ENCODE measurements at regions of chr15 and their contacts with region 1.

Region 1: GRCh38 chr15:64681424-64682024 is 93.9 kb downstream of the RBPMS2 start:
- DNase-seq: peak in 1 of 2 donors; percentile 54
- ATAC-seq: peak; percentile 54 to 87 (median 75)
- H3K4me3 ChIP-seq: no peak overlapping the region
- H3K27ac ChIP-seq: peak overlapping the region in 1 of 10 donors; percentile 24
- H3K4me1 ChIP-seq: peaks cover 3 to 45% (median 13%) of the 10 kb centered on the region in 9 donors
- H3K27me3 ChIP-seq: no peaks in the 10 kb centered on the region
- CTCF ChIP-seq: peak; percentile 27 to 84 (median 65)

Region 2: DNA sequence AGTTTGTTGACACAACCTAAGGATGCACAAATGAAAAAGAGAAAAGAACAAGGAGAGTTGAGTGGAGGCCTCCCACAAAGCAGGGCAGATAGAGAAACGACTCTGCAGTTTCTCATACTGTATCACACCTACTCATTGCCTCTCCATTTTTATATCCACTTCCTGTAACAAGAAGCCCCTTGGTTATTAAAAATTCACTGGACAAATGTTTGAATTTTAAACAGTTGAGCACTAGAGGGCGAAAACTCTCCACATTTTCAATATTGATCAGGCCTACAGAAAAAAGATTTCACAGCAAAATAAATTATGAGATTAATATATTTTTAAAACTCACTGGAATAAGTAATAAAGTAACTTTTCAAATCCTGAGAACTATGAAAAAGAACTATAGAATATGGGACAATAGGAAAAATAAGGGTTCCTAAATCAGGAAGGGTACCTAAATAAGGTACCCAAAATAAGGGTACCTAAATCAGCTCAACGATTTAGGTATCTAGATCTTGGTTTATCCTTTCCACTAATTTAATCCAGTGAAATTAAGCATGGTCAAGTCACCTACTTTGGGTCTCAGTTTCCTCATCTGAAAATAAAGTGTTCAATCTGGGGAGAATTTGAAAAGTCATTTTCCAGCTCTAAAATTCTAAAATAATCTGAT is 471.7 kb before region 1 on chr15:
- intact Hi-C with region 1: loop called in 2 of 10 experiments (anchors 5 to 10 kb)
- DNase-seq: no peak
- ATAC-seq: no peak
- H3K4me3 ChIP-seq: no peak overlapping the region
- H3K27ac ChIP-seq: no peak overlapping the region
- H3K4me1 ChIP-seq: no peaks in the 10 kb centered on the region
- H3K27me3 ChIP-seq: no peaks in the 10 kb centered on the region
- CTCF ChIP-seq: peak in 8 of 9 donors; percentile 4 to 68 (median 48)

Region 3: DNA sequence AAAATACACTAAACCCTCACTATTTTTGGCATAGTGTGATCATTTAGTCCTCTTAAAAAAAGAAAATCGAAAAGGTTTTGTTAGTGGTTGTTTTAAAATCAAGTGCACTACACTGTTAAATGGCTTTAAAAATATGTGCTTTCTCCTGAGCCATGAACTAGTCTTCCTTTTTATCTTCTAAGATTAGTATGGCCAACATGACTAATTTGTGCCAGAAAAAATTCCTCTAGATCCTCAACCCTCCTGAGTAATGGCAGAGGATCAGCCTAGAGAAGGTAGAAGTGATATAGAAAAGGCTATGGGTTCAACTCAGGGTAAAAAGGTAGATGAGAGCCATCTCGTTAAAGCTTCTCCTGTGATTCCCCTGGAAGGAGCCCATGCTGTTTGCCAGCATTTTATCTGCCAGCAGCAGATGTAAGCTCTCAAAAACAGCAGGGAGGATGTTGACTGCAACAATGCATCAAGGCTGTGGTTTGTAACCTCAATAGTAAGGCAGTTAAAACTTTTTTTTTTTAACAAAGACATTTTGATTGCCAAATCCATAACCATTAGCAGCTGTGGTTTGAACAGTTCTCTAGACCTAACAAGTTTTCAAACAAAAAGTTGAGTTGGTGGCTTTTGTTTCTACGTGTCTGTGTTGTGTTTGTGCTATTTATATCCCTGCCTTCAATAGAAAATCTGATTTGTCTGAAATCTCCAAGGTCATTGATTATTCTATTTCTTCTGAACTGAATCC is 251.4 kb before region 1 on chr15:
- intact Hi-C with region 1: loop called in 1 of 10 experiments (anchors 10 kb)
- DNase-seq: peak in 1 of 2 donors; percentile 30
- ATAC-seq: peak in 7 of 8 donors; percentile 58 to 79 (median 71)
- H3K4me3 ChIP-seq: no peak overlapping the region
- H3K27ac ChIP-seq: peak overlapping the region in 5 of 10 donors; percentile 6 to 66 (median 34)
- H3K4me1 ChIP-seq: peaks cover 6 to 26% (median 16%) of the 10 kb centered on the region in 9 donors
- H3K27me3 ChIP-seq: no peaks in the 10 kb centered on the region
- CTCF ChIP-seq: no peak

Region 4: DNA sequence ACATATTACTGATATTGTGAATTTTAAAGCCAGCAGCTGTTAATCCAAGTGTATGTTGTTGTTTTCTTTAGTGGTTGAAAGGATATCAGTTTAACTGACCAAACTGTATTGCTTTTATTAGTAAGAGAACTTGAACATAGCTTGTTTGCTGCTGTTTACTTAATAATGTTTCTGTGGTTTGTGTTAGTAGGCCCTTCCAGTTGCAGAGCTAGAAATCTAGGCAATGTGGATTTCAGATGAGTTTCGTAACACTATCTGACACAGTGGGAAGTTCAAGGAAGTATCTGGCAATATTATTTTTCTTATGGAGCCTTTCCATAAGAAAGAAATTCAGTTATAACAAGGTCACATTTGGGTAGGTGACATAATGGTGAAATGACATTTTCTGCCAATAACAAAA is 202.7 kb before region 1 on chr15:
- intact Hi-C with region 1: no loop called
- DNase-seq: no peak
- ATAC-seq: no peak
- H3K4me3 ChIP-seq: no peak overlapping the region
- H3K27ac ChIP-seq: no peak overlapping the region
- H3K4me1 ChIP-seq: peaks cover 0 to 17% (median 0%) of the 10 kb centered on the region in 9 donors
- H3K27me3 ChIP-seq: no peaks in the 10 kb centered on the region
- CTCF ChIP-seq: no peak

Region 5: DNA sequence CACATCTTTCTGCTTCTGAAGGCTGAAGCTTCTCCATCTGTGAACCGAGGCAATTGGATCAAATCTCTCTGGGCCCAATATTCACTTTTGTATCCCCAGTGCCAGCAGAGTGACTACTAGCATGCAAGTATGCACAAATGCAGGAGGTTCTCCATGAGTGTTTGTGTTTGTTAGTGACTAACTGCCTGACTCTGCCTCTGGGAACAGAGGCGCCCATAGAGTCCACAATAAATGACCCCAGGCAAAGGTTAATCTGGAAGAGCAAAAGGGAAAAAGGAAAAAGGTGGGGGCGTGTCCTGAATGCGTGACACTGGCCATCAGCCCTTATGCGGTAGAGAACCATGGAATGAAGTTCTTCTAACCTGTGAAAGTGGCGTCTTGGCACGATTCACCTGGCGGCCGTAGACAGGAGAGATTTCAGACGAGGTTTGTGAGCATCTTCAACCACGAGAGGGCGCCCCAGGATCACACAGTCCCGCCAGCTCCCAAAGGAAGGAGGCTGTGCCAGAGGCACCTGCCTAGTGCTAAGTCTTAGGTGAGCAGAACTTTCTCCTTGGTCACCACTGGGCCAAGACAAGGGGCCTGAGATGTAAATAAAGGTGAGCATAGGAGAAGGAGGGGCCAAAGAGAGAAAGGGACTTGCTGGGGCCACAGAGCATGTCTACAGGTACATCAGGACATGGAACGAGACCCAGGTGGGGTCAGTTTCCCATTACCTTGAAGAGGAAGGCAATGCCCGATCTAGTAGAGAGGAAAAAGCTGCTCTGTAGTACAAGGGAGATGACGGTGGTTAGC is 49.7 kb after region 1 on chr15:
- intact Hi-C with region 1: loop called in 9 of 10 experiments (anchors 1 to 2 kb)
- DNase-seq: peak; percentile 84 to 85
- ATAC-seq: peak; percentile 56 to 88 (median 72)
- H3K4me3 ChIP-seq: no peak overlapping the region
- H3K27ac ChIP-seq: no peak overlapping the region
- H3K4me1 ChIP-seq: peaks cover 0 to 15% (median 4%) of the 10 kb centered on the region in 9 donors
- H3K27me3 ChIP-seq: no peaks in the 10 kb centered on the region
- CTCF ChIP-seq: peak; percentile 80 to 98 (median 91)

Region 6: DNA sequence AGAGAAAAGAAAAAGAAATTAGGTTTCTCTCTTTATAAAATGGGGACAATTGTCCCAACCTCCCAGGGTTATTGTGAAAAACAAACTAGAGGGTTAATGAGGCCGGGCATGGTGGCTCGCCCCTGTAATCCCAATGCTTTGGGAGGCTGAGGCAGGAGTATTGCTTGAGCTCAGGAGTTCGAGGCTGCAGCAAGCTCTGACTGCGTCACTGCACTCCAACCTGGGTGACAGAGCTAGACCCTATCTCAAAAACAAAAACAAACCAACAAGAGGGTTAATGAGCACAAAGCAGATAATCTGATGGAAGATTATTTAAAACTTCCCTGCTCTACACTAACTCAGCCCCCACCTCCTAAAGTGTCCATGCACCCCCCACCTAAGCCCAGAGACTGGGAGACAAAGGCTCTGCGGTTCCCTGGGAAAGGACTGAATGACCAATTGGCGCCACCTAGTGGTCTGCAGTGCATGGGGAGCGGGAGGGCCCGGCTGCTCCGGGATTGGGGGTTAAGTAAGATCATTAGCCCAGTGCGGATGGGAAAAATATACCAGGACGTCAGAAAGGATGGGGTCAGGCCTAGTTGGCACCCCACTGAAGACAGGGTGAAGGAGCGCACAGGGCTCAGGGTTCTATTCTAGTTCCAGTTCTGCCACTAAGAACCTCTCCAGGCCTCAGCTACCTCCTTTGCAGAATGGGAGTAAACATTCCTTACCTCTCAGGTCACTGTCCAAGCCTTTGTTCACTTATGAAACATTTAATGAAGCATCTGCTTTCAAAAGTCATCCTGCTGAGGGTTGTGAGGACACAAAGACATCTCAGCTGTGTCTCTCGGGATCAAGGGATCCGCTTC is 128.3 kb after region 1 on chr15:
- intact Hi-C with region 1: loop called in 6 of 10 experiments (anchors 5 kb)
- DNase-seq: peak; percentile 85 to 89
- ATAC-seq: peak; percentile 68 to 90 (median 86)
- H3K4me3 ChIP-seq: no peak overlapping the region
- H3K27ac ChIP-seq: no peak overlapping the region
- H3K4me1 ChIP-seq: peaks cover 0 to 18% (median 5%) of the 10 kb centered on the region in 9 donors
- H3K27me3 ChIP-seq: peaks cover 0 to 5% (median 0%) of the 10 kb centered on the region in 7 donors
- CTCF ChIP-seq: peak; percentile 80 to 94 (median 92)